Breast epithelium (tissue), 4 donors: ENCODE measurements at regions of chr11 and their contacts with region 1.

Region 1: GRCh38 chr11:36292311-36292722 is 3.1 kb upstream of the COMMD9 start:
- DNase-seq: no peak
- H3K4me3 ChIP-seq: no peak overlapping the region
- H3K27ac ChIP-seq: no peak overlapping the region
- H3K4me1 ChIP-seq: no peaks in the 10 kb centered on the region
- H3K27me3 ChIP-seq: no peaks in the 10 kb centered on the region
- CTCF ChIP-seq: peak in 2 of 3 donors; percentile 29 to 46
- POLR2A ChIP-seq: no peak

Region 2: GRCh38 chr11:35714882-35715627 is 577.3 kb before region 1 on chr11:
- intact Hi-C with region 1: no loop called
- DNase-seq: no peak
- H3K4me3 ChIP-seq: no peak overlapping the region
- H3K27ac ChIP-seq: no peak overlapping the region
- H3K4me1 ChIP-seq: no peaks in the 10 kb centered on the region
- H3K27me3 ChIP-seq: no peaks in the 10 kb centered on the region
- CTCF ChIP-seq: no peak
- POLR2A ChIP-seq: no peak

Region 3: DNA sequence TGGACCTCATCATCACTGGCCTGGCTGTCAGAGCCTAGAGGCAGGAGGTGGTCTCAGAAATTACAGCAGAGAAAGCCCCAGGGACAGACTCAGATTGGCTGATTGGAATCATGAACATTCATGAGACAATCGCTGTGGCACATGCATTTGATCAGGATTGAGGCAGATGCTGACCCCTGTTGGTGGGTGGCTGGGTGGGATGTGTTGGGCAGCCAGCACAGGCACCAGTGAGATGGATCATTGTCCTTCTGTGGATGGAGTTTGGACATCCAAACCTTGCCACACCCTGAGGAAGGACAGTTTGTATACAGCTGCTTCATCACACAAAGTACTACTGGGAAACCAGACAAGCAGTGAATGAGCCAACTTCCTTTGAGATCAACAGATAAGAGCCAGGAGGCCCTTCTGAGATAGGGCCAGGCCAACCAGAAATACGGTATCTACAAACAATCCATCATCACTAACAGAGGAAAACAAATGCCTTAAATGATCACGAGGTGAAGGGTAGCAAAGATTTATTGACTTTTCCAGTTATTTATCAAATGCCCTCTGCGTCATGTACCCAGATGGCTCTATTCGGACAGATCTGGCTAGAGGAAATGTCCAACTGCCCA is 20.4 kb before region 1 on chr11:
- intact Hi-C with region 1: loop called (anchors 1 kb)
- DNase-seq: no peak
- H3K4me3 ChIP-seq: no peak overlapping the region
- H3K27ac ChIP-seq: no peak overlapping the region
- H3K4me1 ChIP-seq: no peaks in the 10 kb centered on the region
- H3K27me3 ChIP-seq: no peaks in the 10 kb centered on the region
- CTCF ChIP-seq: no peak
- POLR2A ChIP-seq: no peak

Region 4: GRCh38 chr11:36488096-36488495 is 195.8 kb after region 1 on chr11:
- intact Hi-C with region 1: loop called (anchors 5 kb)
- DNase-seq: no peak
- H3K4me3 ChIP-seq: no peak overlapping the region
- H3K27ac ChIP-seq: peak overlapping the region in 1 of 2 donors; percentile 36
- H3K4me1 ChIP-seq: no peaks in the 10 kb centered on the region
- H3K27me3 ChIP-seq: no peaks in the 10 kb centered on the region
- CTCF ChIP-seq: no peak
- POLR2A ChIP-seq: no peak